Motor neuron (in vitro differentiated cells): ENCODE measurements at regions of chr18 and their contacts with region 1.

Region 1: DNA sequence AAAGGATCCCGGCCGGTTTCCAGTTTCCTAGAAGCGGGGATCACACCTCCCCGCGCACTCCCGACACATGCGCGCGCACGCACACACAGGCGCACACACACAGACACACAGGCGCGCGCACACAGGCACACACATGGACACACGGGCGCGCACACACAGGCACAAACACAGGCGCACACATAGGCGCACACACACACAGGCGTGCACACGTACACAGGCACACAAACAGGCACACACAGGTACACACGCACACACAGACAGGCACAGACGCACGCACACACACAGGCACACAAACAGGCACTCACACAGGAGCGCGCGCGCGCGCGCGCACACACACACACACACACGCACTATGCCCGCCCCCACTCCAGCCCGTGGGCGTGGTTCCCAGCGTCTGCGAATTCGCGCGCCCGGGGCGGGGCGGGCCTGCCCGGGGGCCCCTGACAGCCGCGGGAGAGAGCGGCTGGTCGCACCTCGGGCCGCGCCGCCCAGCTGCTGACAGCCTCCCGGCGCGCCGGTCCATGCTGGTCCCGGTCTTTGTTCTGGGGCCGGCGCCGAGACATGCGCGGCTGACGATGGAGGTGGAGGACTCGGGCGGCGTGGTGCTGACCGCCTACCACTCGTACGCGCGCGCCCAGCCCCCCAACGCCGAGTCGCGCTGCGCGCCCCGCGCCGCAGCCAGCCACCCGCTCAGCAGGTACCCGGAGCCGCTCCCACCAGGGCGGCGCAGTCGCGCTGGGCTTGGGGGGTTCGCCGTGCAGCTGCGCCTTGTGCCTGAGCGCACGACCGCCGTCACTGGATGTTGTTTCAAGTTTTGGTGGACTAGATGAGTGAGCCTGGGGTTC is at the start of gene ARHGAP28:
- ATAC-seq: peak; percentile 92 to 95 (median 94)
- H3K4me3 ChIP-seq: peak within 1 kb of the TSS; percentile 39 to 51 (median 44)
- H3K27ac ChIP-seq: peak within 1 kb of the TSS; percentile 71 to 72
- H3K4me1 ChIP-seq: peaks cover 6 to 25% of the 10 kb centered on the region in 2 donors
- total RNA-seq, gene ARHGAP28: 5.4 to 19.4 (median 9.8) TPM

Region 2: DNA sequence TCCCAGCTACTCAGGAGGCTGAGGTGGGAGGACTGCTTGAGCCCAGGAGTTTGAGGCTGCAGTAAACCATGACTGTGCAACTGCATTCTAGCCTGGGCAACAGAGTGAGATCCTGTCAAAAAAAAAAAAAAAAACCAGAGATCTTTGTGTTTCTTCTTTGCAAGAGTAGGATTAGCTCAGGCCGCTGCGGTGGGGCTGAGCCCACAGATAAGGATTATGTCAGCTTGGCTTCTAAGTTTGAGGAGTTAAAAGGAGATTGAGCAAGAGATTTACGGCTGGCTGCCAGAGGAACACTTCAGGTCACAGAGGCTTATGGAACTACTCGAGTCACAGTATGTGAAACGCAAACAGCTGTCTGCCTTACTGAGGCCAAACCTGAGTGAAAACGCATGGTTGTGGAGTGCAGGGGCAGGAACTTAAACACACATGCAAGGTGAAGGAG is 168.0 kb before region 1 on chr18:
- in situ Hi-C with region 1: loop called in 1 of 9 experiments (anchors 25 kb)
- ATAC-seq: peak in 5 of 8 experiments; percentile 31 to 43 (median 39)
- H3K4me3 ChIP-seq: no peak overlapping the region
- H3K27ac ChIP-seq: no peak overlapping the region
- H3K4me1 ChIP-seq: peaks cover 9 to 17% of the 10 kb centered on the region in 2 donors

Region 3: GRCh38 chr18:6781786-6782185 is 52.3 kb after region 1 on chr18:
- in situ Hi-C with region 1: no loop called
- ATAC-seq: peak in 2 of 8 experiments; percentile 46 to 49
- H3K4me3 ChIP-seq: no peak overlapping the region
- H3K27ac ChIP-seq: no peak overlapping the region
- H3K4me1 ChIP-seq: peaks cover 6 to 11% of the 10 kb centered on the region in 2 donors

Region 4: DNA sequence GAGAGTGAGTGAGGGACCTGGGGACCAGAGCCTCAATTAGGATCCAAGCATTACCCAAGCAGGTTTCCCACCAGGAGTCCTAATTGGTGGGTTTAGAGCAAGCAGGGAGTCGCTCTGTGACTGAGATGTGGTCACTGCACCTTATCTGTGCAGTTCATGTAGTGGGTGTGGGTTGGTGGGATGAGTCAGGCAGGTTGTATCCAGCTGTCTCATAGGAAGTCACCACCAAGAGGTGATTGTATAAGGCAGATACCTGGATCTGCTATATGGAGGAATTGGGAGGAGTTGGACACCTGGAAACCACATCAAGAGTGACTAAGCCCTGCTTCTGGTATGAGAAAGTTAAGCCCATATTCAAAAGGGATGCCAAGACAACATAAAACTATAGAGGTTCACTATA is 106.9 kb after region 1 on chr18:
- in situ Hi-C with region 1: no loop called
- ATAC-seq: no peak
- H3K4me3 ChIP-seq: no peak overlapping the region
- H3K27ac ChIP-seq: no peak overlapping the region
- H3K4me1 ChIP-seq: no peaks in the 10 kb centered on the region

Region 5: DNA sequence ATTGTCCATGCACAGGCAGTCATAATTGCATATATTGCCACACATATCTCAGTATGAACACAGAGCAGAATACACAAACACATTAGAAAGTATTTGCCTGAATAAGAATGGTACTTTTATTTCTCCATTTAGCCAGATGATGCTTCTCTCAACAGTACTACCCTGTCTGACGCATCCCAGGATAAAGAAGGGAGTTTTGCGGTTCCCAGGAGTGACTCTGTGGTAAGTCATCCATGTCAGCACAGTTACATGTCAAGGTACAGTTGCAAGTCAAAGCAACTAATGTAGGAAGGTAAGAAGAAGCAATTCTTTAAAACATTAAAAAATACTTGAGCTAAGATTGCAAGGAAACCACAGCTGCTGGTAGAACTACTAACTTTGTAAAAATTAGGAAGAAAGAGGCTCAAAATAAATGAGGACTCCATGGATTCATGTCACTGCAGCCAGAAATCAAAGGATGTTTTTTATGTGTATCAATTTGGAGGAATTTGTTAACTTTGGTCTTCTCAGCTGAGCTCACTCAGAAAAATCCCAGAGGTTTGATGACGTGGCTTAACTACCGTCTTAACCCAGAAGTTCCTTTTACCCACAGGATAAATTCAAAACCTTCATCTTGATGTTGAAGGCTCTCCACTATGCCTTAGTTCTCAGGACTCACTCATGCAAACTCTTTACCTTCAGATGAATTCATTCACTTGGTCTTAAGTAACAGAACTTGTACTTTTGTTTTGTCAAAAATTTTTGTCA is 130.4 kb after region 1 on chr18:
- in situ Hi-C with region 1: no loop called
- ATAC-seq: no peak
- H3K4me3 ChIP-seq: no peak overlapping the region
- H3K27ac ChIP-seq: no peak overlapping the region
- H3K4me1 ChIP-seq: peaks cover 0 to 5% of the 10 kb centered on the region in 2 donors